ENCODE measurements at regions of chr1 and their contacts with region 1.

Region 1: DNA sequence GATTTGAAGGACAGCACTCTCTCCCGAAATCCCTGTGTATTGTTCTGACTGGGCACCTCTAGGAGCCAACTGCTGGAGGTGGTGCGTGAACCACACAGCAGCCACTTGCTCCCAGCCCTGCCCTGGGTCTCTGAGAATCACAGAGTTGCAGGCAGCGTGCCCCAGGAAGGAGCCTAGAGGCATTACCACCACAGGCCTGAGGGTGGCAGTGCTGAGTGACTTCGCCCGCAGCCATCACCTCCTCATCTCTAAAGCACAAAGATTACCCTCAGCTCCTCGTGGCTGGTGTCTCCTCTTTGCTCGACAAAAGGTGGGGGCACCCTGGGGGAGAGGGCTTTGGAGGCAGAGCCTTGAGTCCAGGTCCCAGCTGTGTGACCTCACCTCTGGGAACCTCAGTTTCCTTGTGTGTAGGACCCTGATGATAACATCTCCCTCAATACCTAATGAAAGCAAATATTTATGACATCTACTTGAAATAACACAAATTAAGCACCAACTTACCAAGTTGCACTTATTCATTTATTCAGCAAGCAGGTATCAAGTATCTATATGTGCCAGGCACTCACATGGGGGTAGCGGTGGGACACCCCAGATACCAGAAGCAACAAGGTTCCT is 86.3 kb downstream of the VWA5B1 start:
- DNase-seq: no peak
- H3K4me3 ChIP-seq: no peak overlapping the region
- CTCF ChIP-seq: peak; percentile 90

Region 2: GRCh38 chr1:20361806-20362640 is 15.0 kb before region 1 on chr1:
- CTCF ChIA-PET with region 1: interaction called, 194 read pairs
- POLR2A ChIA-PET with region 1: no interaction called
- DNase-seq: no peak
- H3K4me3 ChIP-seq: no peak overlapping the region
- CTCF ChIP-seq: peak; percentile 91

Region 3: DNA sequence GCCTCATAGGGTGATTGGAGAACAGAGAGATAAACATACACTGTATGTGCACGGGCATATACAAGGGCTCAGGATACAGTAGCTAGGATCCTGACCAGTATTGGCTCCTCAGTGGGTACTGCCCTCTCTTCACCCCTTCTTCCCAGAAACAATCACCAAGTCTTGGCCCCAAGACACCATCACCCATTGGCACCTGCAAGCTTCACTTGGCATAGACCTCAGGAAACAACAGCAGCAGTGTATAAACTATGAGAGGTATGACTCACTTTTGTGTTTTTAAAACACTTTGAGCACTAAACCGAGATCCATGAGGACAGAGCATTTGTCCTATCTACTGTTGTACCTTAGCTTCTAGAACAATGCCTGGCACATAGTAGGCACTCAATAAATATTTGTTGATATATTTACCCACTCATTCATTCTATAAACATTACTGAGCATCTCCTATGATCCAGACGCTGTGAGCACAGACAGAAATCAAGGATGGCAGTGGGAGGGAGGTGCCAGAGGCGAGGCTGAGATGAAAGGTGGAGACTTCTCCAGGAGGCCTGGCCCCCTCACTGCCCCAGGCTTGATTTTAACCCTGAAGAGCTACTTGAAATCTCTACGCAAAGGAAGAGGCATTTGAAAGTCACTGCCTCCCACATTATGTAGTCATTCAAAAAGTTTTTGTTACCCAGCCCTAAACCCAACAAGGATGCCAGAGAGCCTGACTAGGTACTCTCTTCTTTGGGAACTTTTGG is 13.8 kb after region 1 on chr1:
- CTCF ChIA-PET with region 1: interaction called, 23 read pairs
- POLR2A ChIA-PET with region 1: no interaction called
- DNase-seq: no peak
- H3K4me3 ChIP-seq: no peak overlapping the region
- CTCF ChIP-seq: no peak

Region 4: GRCh38 chr1:20400341-20401177 is 23.6 kb after region 1 on chr1:
- CTCF ChIA-PET with region 1: interaction called, 26 read pairs
- POLR2A ChIA-PET with region 1: no interaction called
- DNase-seq: no peak
- H3K4me3 ChIP-seq: no peak overlapping the region
- CTCF ChIP-seq: no peak

Region 5: GRCh38 chr1:20430355-20431175 is 53.6 kb after region 1 on chr1:
- CTCF ChIA-PET with region 1: interaction called, 70 read pairs
- POLR2A ChIA-PET with region 1: no interaction called
- DNase-seq: no peak
- H3K4me3 ChIP-seq: no peak overlapping the region
- CTCF ChIP-seq: peak; percentile 91

Region 6: DNA sequence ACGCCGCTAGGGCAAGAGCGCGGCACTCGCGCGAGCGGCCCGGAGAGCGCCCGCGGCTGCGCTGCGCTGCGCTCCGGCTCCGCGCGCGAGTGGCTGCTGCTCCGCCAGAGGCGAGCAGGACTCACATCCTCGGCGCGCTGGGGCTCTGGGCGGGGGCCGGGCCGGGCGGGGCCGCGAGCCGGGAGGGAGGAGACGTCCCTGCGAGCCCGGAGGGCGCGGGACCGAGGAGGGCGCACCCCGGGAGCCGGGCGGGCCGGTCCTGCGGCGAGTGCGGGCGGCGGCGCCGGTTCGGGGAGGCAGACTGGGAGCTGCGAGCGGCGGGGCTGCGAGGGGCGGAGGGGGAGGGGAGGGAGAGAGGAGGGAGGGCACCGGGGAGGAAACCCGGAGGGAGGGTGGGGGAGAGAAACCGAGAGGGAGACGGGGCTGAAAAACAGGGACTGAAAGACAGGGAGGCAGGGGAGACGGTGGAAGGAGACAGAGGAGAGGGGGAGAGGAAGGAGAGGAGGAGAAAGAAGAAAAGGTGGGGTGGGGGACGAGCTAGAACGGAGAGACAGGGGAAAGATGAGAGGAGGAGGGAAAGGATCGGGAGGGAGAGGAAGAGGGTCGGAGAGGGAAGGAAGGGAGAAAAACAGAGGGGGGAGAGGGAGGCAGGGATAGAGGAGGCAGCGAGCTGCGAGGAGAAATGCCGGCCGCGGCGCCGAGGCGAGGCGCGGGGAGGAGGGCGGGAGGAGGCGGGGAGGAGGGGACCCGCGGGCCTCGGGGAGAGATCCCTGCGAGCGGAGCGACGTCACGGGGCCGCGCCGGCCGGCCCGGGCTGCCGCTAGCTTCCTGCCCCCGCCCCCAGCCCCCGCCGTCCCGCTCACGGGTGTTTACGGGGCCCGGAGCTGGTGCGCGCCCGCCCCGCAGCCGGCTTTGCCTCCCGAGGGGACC is 108.8 kb after region 1 on chr1 and contains the start of gene CAMK2N1:
- CTCF ChIA-PET with region 1: interaction called, 107 read pairs
- POLR2A ChIA-PET with region 1: interaction called, 7 read pairs
- DNase-seq: no peak
- H3K4me3 ChIP-seq: peak within 1 kb of the TSS; percentile 70
- CTCF ChIP-seq: no peak

Measured in AG04449 (cell line).